K562 (cell line): ENCODE measurements at regions of chr17 and their contacts with region 1.

Region 1: DNA sequence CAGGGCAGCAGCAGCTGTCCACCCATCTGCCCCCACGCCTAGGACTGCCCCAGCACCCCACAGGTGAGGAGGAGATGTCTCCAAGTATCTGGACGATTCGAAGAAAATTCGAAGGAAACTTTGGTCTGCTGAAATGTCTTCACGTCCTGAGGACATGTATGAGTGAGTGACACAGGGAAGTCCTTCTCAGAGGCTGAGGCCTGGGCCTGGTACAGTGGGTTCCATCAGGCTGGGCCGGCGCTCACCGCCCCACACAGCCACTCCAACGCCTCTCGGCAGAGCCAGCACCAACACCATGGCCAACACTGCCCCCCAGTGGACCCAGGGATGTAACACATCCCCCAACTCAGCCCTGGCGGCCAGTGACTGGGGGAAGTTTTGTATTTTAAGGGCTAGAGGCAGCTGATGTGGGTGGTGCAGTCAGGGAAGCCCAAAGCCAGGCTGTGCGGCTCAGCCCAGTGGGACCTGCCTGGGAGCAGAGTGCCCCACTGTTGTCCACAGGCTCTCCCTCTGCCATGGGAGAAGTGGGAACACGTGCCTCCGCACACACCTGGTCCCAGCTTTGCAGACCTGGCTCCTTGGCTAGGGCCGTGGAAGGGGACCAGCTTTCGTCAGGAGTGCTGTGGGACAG is 55.8 kb upstream of the FASN start:
- DNase-seq: peak; percentile 85 to 90 (median 88)
- ATAC-seq: peak; percentile 99
- H3K4me3 ChIP-seq: no peak overlapping the region
- H3K27ac ChIP-seq: no peak overlapping the region
- H3K4me1 ChIP-seq: peaks cover 0 to 44% of the 10 kb centered on the region in 2 experiments; a peak in 3 of 5 replicates
- H3K27me3 ChIP-seq: no peaks in the 10 kb centered on the region
- CTCF ChIP-seq: peak; percentile 96 to 98 (median 96)
- EP300 ChIP-seq: no peak
- POLR2A ChIP-seq: no peak
- RAD21 ChIP-seq: peak; percentile 98 to 99

Region 2: DNA sequence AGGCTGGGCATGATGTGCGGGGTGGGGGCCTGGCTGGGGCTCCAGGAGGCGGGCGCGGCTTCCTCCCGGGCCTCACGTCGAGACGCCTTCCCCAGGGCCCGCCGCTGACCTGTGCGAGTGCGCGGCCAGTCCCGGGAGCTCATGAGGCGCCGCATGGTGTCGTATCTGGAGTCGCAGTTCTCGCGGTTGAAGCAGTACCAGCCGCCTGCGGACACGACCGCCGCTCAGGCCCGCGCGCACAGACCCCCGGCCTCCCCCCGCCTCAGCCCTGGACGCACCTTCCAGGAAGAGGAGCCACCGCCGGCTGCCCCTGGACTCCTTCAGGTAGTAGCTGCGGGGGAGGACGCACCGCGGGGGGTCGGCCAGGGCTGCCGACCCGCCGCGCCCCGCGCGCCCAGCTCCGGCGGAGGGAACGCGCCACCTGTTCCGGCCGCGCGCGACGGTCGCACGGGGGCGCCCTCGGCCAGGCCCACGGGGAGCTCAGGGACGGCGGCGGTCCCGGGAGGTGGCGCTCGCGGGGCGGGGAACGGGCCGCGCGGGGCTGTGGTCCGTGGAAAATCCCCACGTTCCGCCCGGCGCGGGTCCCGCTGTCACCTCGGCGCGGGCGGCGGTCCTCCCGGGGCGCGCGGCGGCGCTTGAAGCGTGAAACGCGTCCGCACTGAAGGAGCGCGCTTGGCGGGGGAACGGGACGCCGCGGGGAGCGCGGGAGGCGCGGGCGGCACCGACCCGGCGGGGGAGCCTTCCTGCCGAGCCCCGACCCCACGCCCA is 194.3 kb before region 1 on chr17:
- CTCF ChIA-PET with region 1: interaction called, 20 read pairs
- POLR2A ChIA-PET with region 1: no interaction called
- in situ Hi-C with region 1: no loop called
- intact Hi-C with region 1: loop called (anchors 10 kb)
- DNase-seq: peak; percentile 85 to 88 (median 86)
- ATAC-seq: peak; percentile 84
- H3K4me3 ChIP-seq: peak overlapping the region; percentile 58
- H3K27ac ChIP-seq: peak overlapping the region; percentile 68
- H3K4me1 ChIP-seq: peaks cover 7 to 73% of the 10 kb centered on the region in 2 experiments; a peak in 4 of 5 replicates
- H3K27me3 ChIP-seq: no peaks in the 10 kb centered on the region
- CTCF ChIP-seq: peak; percentile 65 to 99 (median 99)
- EP300 ChIP-seq: no peak
- POLR2A ChIP-seq: peak; percentile 56; the same call in 1 of the 2 replicates
- RAD21 ChIP-seq: peak; percentile 92 to 95

Region 3: DNA sequence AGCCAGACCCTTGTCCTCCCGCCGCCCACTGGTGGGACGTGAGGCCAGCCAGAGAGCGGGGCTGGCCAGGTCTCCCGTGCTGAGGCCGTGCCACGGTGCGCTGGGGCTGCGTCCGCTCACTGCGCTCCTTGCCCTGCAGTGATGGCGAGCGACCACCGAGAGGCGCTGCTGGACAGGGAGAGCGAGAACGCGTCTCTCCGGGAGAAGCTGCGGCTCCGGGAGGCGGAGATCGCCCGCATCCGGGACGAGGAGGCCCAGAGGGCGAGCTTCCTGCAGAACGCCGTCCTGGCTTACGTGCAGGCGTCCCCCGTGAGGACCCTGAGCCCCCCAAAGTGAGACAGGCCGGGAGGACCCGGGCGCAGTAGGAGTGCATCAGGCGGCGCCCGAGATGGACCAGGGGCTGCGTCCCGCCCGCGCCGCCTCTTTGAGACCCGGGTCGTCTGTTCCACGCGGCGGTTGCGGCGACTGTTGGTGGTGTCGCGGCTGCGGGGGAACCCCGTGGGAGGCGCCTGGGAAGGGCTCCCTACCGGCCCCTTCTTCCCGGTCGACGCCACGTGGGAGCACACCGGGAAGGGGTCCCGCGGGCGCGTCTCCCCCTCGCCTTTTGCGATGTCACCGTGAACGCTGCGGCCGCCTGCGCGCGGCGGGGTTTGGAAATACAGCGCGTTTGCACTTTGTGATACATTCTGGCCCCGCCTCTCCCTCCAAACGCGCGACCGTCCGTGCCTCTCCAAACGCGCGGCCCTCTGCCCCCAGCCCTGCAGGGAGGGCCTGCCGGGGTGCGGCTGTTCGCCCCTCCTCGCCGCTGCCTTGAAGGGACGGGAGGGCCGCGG is 123.2 kb before region 1 on chr17:
- CTCF ChIA-PET with region 1: interaction called, 27 read pairs
- POLR2A ChIA-PET with region 1: interaction called, 8 read pairs
- in situ Hi-C with region 1: loop called (anchors 5 kb)
- intact Hi-C with region 1: loop called (anchors 1 kb)
- DNase-seq: peak; percentile 70 to 92 (median 76)
- ATAC-seq: peak; percentile 80
- H3K4me3 ChIP-seq: peak overlapping the region; percentile 74
- H3K27ac ChIP-seq: peak overlapping the region; percentile 78; the same call in 2 of the 3 replicates
- H3K4me1 ChIP-seq: peaks cover 17 to 87% of the 10 kb centered on the region in 2 experiments
- H3K27me3 ChIP-seq: no peaks in the 10 kb centered on the region
- CTCF ChIP-seq: peak; percentile 90 to 95 (median 94)
- EP300 ChIP-seq: no peak
- POLR2A ChIP-seq: peak; percentile 55; the same call in 1 of the 2 replicates
- RAD21 ChIP-seq: peak; percentile 96